ENCODE measurements at regions of chr14 and their contacts with region 1.

Region 1: DNA sequence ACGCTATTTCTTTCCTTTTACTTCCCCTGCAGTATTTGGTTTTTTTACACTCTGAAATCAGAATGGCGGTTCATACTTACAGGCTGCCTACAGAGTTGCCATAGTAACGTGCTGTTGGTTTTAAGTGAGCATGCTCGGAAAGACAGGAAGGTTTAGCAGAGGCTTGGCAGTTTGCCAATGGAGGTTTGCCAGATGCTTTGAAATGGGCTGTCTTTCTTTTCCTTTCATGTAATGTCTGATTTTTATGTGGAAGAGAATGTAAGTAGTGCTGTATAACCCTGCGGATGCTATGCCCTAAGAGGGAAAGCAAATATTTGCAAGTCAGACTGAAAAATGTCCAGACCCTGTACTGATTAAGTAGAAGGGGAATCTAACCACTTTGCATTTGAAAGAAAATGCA is 32.8 kb downstream of the ARID4A start:
- DNase-seq: peak; percentile 94
- ATAC-seq: peak; percentile 93

Region 2: DNA sequence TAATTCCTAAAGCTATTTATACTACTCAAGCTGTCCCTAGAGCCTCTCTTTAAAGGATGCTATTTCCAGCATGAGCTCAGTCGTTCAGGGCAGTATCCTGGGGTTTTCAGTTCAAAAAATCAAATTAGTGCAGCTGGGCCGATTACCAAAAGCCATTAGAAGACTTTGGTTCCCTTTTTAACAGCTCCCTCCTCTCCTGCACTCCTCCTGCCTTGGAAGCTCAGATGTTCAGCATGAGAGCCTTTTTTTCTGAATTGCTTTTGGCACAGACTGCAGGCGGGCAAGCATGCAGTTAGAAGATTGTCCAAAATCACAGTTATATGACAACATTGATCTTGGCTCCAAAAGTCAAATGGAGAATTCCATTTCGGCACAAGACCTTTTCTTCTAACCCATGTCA is 644.8 kb before region 1 on chr14:
- intact Hi-C with region 1: loop called (anchors 5 kb)
- DNase-seq: no peak
- ATAC-seq: peak; percentile 85

Region 3: GRCh38 chr14:58395812-58396788 is 65.0 kb after region 1 on chr14 and contains the start of gene TOMM20L:
- intact Hi-C with region 1: no loop called
- DNase-seq: peak; percentile 81
- ATAC-seq: peak; percentile 86
- total RNA-seq, gene TOMM20L: not detected

Region 4: GRCh38 chr14:58467575-58467974 is 136.5 kb after region 1 on chr14:
- intact Hi-C with region 1: no loop called
- DNase-seq: no peak
- ATAC-seq: no peak

Measured in sciatic nerve (tissue), 2 donors.